Cardiac septum (tissue), 1 donor: ENCODE measurements at regions of chr10 and their contacts with region 1.

Region 1: GRCh38 chr10:123583639-123584418 is 82.3 kb upstream of the GPR26 start:
- DNase-seq: no peak

Region 2: GRCh38 chr10:123599366-123599849 is 15.6 kb after region 1 on chr10:
- intact Hi-C with region 1: loop called (anchors 1 kb)
- DNase-seq: no peak

Region 3: GRCh38 chr10:123967396-123968243 is 383.8 kb after region 1 on chr10:
- intact Hi-C with region 1: loop called (anchors 1 kb)
- DNase-seq: no peak